MCF 10A (cell line): ENCODE measurements at regions of chr22 and their contacts with region 1.

Region 1: GRCh38 chr22:25447686-25448434 is 116.6 kb upstream of the GRK3 start:
- DNase-seq: peak; percentile 88
- H3K4me3 Mint-ChIP-seq: peak overlapping the region; percentile 91
- H3K27ac Mint-ChIP-seq: peak overlapping the region; percentile 57
- H3K4me1 Mint-ChIP-seq: peaks cover 22% of the 10 kb centered on the region
- H3K27me3 Mint-ChIP-seq: no peaks in the 10 kb centered on the region
- CTCF ChIP-seq: peak; percentile 90

Region 2: GRCh38 chr22:25362215-25362882 is 85.5 kb before region 1 on chr22:
- CTCF ChIA-PET with region 1: interaction called, 4 read pairs
- POLR2A ChIA-PET with region 1: no interaction called
- intact Hi-C with region 1: loop called (anchors 1 kb)
- DNase-seq: peak; percentile 56
- H3K4me3 Mint-ChIP-seq: no peak overlapping the region
- H3K27ac Mint-ChIP-seq: no peak overlapping the region
- H3K4me1 Mint-ChIP-seq: peaks cover 6% of the 10 kb centered on the region
- H3K27me3 Mint-ChIP-seq: no peaks in the 10 kb centered on the region
- CTCF ChIP-seq: peak; percentile 84

Region 3: GRCh38 chr22:25419237-25420113 is 28.4 kb before region 1 on chr22:
- CTCF ChIA-PET with region 1: interaction called, 15 read pairs
- POLR2A ChIA-PET with region 1: interaction called, 3 read pairs
- intact Hi-C with region 1: no loop called
- DNase-seq: no peak
- H3K4me3 Mint-ChIP-seq: no peak overlapping the region
- H3K27ac Mint-ChIP-seq: no peak overlapping the region
- H3K4me1 Mint-ChIP-seq: no peaks in the 10 kb centered on the region
- H3K27me3 Mint-ChIP-seq: peaks cover 48% of the 10 kb centered on the region
- CTCF ChIP-seq: no peak

Region 4: DNA sequence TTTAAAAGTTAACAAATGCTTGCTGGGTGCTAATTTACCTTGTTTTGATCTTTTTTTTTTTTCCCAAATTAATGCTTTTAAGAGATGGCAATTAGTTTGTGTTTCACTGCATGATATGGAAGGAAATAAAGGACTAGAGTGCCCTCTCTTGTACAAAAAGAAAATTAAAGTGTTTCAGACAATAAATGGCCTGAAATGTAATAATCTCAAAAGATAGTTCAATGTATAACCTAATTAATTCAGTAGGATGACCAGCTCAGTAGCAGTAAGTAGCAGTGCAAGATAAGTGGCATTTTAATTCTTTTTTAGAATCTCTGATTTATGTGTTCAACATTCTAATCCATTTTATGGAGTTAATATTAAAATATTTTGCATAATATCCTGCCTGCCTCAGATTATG is 254.2 kb after region 1 on chr22:
- CTCF ChIA-PET with region 1: interaction called, 5 read pairs
- POLR2A ChIA-PET with region 1: interaction called, 3 read pairs
- intact Hi-C with region 1: loop called (anchors 5 kb)
- DNase-seq: peak; percentile 16
- H3K4me3 Mint-ChIP-seq: no peak overlapping the region
- H3K27ac Mint-ChIP-seq: no peak overlapping the region
- H3K4me1 Mint-ChIP-seq: no peaks in the 10 kb centered on the region
- H3K27me3 Mint-ChIP-seq: no peaks in the 10 kb centered on the region
- CTCF ChIP-seq: peak; percentile 55

Region 5: DNA sequence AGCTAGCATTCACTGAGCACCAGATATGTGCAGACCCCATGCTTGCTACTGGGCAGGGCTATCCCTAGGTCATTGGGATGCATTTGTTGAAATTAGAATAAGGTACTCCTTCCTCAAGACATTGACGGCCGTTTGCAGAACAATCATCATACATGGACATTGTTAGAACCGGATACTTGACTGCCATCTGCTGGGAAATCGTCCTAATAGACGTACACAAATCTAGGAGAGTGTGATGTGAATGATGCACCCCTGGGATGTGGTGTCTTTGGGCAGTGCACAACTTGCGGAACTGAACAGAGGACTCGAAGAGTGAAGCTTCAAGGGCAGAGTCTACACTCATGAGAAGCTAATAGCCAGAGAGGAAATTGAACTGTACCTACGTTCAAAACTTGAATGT is 330.0 kb after region 1 on chr22:
- CTCF ChIA-PET with region 1: interaction called, 10 read pairs
- POLR2A ChIA-PET with region 1: no interaction called
- intact Hi-C with region 1: loop called (anchors 5 kb)
- DNase-seq: peak; percentile 71
- H3K4me3 Mint-ChIP-seq: no peak overlapping the region
- H3K27ac Mint-ChIP-seq: no peak overlapping the region
- H3K4me1 Mint-ChIP-seq: no peaks in the 10 kb centered on the region
- H3K27me3 Mint-ChIP-seq: no peaks in the 10 kb centered on the region
- CTCF ChIP-seq: peak; percentile 31